ENCODE measurements at regions of chr17 and their contacts with region 1.

Region 1: DNA sequence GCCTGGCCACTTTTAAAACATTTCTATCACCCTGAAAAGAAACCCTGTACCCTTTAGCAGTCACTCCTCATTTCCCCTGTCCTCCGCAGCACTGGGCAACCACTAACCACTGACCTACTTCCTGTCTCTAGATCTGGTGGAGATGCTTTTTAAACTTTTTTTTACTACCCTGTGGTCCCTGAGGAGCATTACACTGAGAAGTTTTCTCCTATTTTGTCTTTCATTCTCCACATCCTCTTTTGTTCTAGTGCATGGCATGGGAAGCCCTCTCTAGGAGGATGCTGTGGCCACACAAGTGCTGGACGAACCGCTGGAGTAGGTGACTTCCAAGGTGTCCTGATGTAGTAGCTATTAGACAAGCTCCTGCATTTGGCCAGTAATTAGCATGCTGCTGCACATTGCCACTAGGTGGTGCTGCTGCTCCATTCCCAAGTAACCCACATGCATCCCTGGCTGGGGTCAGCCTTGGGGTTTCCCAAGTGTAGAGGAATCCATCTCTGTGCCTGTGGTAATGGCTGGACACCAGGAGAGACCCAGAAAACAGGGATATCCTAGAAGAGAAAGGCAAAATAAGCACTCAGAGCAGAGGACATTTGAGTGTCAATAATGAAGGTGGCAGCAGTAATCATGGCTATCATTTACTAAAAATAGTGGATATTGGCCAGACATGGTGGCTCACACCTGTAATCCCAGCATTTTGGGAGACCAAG is 143.8 kb upstream of the CRHR1 start:
- DNase-seq: peak; percentile 39
- H3K4me3 ChIP-seq: no peak overlapping the region
- H3K27ac ChIP-seq: no peak overlapping the region
- H3K4me1 ChIP-seq: no peaks in the 10 kb centered on the region
- H3K27me3 ChIP-seq: no peaks in the 10 kb centered on the region
- CTCF ChIP-seq: peak; percentile 97 to 99

Region 2: GRCh38 chr17:45828628-45829027 is 188.3 kb after region 1 on chr17:
- CTCF ChIA-PET with region 1: interaction called, 13 read pairs
- dilution Hi-C with region 1: loop called (anchors 25 kb)
- in situ Hi-C with region 1: loop called (anchors 5 kb)
- intact Hi-C with region 1: loop called (anchors 1 kb)
- DNase-seq: no peak
- H3K4me3 ChIP-seq: no peak overlapping the region
- H3K27ac ChIP-seq: no peak overlapping the region
- H3K4me1 ChIP-seq: no peaks in the 10 kb centered on the region
- H3K27me3 ChIP-seq: no peaks in the 10 kb centered on the region
- CTCF ChIP-seq: no peak

Region 3: DNA sequence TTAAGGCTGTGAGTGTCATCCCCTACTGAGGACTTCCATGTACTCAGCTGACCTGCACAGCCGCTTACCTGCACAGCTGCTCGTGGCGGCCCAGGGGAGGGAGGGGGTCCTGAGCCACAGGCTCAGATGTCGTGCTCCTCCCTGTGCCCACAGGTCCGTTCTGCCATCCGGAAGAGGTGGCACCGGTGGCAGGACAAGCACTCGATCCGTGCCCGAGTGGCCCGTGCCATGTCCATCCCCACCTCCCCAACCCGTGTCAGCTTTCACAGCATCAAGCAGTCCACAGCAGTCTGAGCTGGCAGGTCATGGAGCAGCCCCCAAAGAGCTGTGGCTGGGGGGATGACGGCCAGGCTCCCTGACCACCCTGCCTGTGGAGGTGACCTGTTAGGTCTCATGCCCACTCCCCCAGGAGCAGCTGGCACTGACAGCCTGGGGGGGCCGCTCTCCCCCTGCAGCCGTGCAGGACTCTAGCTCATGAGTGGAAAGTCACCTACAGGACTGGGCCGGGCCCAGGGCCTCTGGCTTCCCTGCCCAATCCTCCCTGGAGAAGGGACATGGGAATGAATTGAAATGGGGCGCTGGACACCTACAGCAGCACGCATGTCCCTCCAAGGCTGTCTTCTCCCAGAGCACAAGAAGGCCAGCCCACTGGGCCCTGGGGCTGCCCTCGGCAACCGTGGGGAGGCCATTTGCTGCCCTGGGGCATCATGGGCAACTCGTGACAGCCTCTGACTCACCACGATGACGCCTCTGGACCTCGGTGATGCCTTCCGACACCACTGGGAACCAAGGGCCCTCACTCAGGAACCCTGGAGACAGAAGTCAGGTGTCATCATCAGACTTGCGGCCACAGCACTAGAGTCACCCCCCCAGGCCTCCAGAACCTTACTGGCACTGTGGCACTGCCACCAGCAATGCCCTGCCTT is 194.4 kb after region 1 on chr17:
- CTCF ChIA-PET with region 1: interaction called, 13 read pairs
- dilution Hi-C with region 1: loop called (anchors 25 kb)
- in situ Hi-C with region 1: loop called (anchors 5 kb)
- intact Hi-C with region 1: loop called (anchors 1 kb)
- DNase-seq: no peak
- H3K4me3 ChIP-seq: no peak overlapping the region
- H3K27ac ChIP-seq: no peak overlapping the region
- H3K4me1 ChIP-seq: no peaks in the 10 kb centered on the region
- H3K27me3 ChIP-seq: no peaks in the 10 kb centered on the region
- CTCF ChIP-seq: no peak

Region 4: GRCh38 chr17:45841883-45842525 is 201.7 kb after region 1 on chr17:
- CTCF ChIA-PET with region 1: no interaction called
- dilution Hi-C with region 1: loop called (anchors 25 kb)
- in situ Hi-C with region 1: no loop called
- intact Hi-C with region 1: no loop called
- DNase-seq: peak; percentile 14
- H3K4me3 ChIP-seq: no peak overlapping the region
- H3K27ac ChIP-seq: no peak overlapping the region
- H3K4me1 ChIP-seq: no peaks in the 10 kb centered on the region
- H3K27me3 ChIP-seq: no peaks in the 10 kb centered on the region
- CTCF ChIP-seq: no peak

Region 5: GRCh38 chr17:45852535-45853297 is 212.4 kb after region 1 on chr17:
- CTCF ChIA-PET with region 1: no interaction called
- dilution Hi-C with region 1: loop called (anchors 25 kb)
- in situ Hi-C with region 1: no loop called
- intact Hi-C with region 1: loop called (anchors 1 kb)
- DNase-seq: peak; percentile 22
- H3K4me3 ChIP-seq: no peak overlapping the region
- H3K27ac ChIP-seq: no peak overlapping the region
- H3K4me1 ChIP-seq: no peaks in the 10 kb centered on the region
- H3K27me3 ChIP-seq: no peaks in the 10 kb centered on the region
- CTCF ChIP-seq: peak; percentile 90

Region 6: GRCh38 chr17:46002311-46002972 is 362.1 kb after region 1 on chr17:
- CTCF ChIA-PET with region 1: no interaction called
- dilution Hi-C with region 1: no loop called
- in situ Hi-C with region 1: no loop called
- intact Hi-C with region 1: no loop called
- DNase-seq: peak; percentile 41
- H3K4me3 ChIP-seq: no peak overlapping the region
- H3K27ac ChIP-seq: no peak overlapping the region
- H3K4me1 ChIP-seq: no peaks in the 10 kb centered on the region
- H3K27me3 ChIP-seq: no peaks in the 10 kb centered on the region
- CTCF ChIP-seq: peak; percentile 83 to 88